ENCODE measurements at regions of chr11 and their contacts with region 1.

Region 1: GRCh38 chr11:75248690-75249268 is 8.2 kb downstream of the TPBGL start:
- DNase-seq: peak; percentile 91
- H3K4me3 Mint-ChIP-seq: no peak overlapping the region
- H3K27ac Mint-ChIP-seq: no peak overlapping the region
- H3K4me1 Mint-ChIP-seq: no peaks in the 10 kb centered on the region
- H3K27me3 Mint-ChIP-seq: peaks cover 59% of the 10 kb centered on the region

Region 2: GRCh38 chr11:75022759-75023396 is 225.9 kb before region 1 on chr11:
- CTCF ChIA-PET with region 1: interaction called, 66 read pairs
- DNase-seq: peak; percentile 85
- H3K4me3 Mint-ChIP-seq: no peak overlapping the region
- H3K27ac Mint-ChIP-seq: no peak overlapping the region
- H3K4me1 Mint-ChIP-seq: no peaks in the 10 kb centered on the region
- H3K27me3 Mint-ChIP-seq: no peaks in the 10 kb centered on the region

Region 3: GRCh38 chr11:75182669-75183068 is 66.1 kb before region 1 on chr11:
- CTCF ChIA-PET with region 1: no interaction called
- DNase-seq: no peak
- H3K4me3 Mint-ChIP-seq: no peak overlapping the region
- H3K27ac Mint-ChIP-seq: no peak overlapping the region
- H3K4me1 Mint-ChIP-seq: no peaks in the 10 kb centered on the region
- H3K27me3 Mint-ChIP-seq: peaks cover 54% of the 10 kb centered on the region

Region 4: GRCh38 chr11:75214411-75214821 is 34.4 kb before region 1 on chr11:
- CTCF ChIA-PET with region 1: interaction called, 10 read pairs
- DNase-seq: peak; percentile 93
- H3K4me3 Mint-ChIP-seq: no peak overlapping the region
- H3K27ac Mint-ChIP-seq: no peak overlapping the region
- H3K4me1 Mint-ChIP-seq: no peaks in the 10 kb centered on the region
- H3K27me3 Mint-ChIP-seq: peaks cover 24% of the 10 kb centered on the region

Region 5: GRCh38 chr11:75270896-75271418 is 22.2 kb after region 1 on chr11:
- CTCF ChIA-PET with region 1: interaction called, 17 read pairs
- DNase-seq: peak; percentile 62
- H3K4me3 Mint-ChIP-seq: no peak overlapping the region
- H3K27ac Mint-ChIP-seq: peak overlapping the region; percentile 17
- H3K4me1 Mint-ChIP-seq: peaks cover 36% of the 10 kb centered on the region
- H3K27me3 Mint-ChIP-seq: no peaks in the 10 kb centered on the region

Region 6: DNA sequence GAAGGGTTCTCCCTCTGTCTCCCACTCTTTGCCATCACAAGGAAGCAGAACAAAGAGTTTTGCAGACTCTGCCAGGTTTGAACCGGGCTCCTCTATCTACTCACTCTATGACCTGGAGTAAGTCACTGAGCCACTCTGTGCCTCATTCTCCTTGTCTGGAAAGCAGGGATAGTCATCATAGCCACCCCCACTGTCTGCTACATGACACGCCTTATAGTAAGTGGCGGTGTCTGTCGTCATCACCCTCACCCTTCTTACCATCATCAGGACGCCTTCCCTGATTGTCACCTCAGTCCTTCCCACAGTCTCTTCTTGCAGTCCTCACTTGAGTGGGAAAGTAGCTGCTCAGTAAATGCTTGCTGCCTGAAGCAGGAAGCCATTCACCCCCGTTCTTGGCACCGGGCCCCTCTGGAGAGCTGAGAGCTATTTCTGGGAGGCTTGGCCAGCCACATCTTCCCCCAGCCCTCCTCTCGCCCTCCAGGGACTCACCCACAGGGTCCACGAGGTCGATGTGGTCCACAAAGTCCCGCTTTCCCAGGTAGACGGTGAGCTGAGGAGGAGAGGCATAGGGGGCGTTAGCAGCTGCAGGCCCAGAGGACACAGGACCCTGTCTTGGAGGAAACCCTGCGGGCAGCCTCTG is 38.2 kb after region 1 on chr11:
- CTCF ChIA-PET with region 1: no interaction called
- DNase-seq: no peak
- H3K4me3 Mint-ChIP-seq: no peak overlapping the region
- H3K27ac Mint-ChIP-seq: no peak overlapping the region
- H3K4me1 Mint-ChIP-seq: no peaks in the 10 kb centered on the region
- H3K27me3 Mint-ChIP-seq: no peaks in the 10 kb centered on the region

Measured in activated naive CD4-positive, alpha-beta T cell treated with anti-CD3 and anti-CD28 coated beads, Interleukin-2, amount 10 ng/mL, durations not matched to agents 7 days and 5 days (primary cell).